HepG2 (cell line): ENCODE measurements at regions of chr4 and their contacts with region 1.

Region 1: DNA sequence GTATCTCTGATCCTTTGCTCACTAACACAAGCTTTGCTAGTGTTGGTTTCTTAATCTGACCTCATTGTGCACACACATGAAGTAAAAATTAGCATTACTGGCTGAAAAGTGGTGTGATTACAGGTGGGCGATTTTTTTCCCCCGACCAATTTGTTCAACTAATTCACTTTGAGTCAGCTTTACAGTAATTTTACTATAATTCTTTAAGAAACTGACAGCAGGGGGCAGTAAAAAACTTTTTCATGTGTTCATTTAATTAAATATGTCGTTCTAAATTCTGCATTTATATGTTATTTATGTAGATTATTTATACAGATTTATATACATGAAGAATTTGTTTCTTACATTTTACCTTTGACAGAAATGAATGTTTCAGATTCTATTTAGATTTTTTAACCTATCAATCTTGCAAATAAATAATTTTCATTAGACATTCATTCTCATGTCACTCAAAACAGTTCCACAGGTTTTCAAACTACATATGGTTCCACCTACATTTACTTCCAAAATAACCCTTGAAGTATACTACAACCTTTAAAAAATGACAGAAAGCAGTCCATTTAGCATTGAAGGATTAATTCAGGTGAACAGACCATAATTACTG is 17.5 kb downstream of the PALLD start:
- DNase-seq: peak; percentile 5
- ATAC-seq: no peak
- H3K4me3 ChIP-seq: no peak overlapping the region
- H3K27ac ChIP-seq: no peak overlapping the region
- H3K4me1 ChIP-seq: no peaks in the 10 kb centered on the region
- H3K27me3 ChIP-seq: no peaks in the 10 kb centered on the region
- CTCF ChIP-seq: 0 out of 2 replicates have a peak, but pooled peaks have one; percentile 13
- EP300 ChIP-seq: no peak
- POLR2A ChIP-seq: no peak
- RAD21 ChIP-seq: no peak

Region 2: DNA sequence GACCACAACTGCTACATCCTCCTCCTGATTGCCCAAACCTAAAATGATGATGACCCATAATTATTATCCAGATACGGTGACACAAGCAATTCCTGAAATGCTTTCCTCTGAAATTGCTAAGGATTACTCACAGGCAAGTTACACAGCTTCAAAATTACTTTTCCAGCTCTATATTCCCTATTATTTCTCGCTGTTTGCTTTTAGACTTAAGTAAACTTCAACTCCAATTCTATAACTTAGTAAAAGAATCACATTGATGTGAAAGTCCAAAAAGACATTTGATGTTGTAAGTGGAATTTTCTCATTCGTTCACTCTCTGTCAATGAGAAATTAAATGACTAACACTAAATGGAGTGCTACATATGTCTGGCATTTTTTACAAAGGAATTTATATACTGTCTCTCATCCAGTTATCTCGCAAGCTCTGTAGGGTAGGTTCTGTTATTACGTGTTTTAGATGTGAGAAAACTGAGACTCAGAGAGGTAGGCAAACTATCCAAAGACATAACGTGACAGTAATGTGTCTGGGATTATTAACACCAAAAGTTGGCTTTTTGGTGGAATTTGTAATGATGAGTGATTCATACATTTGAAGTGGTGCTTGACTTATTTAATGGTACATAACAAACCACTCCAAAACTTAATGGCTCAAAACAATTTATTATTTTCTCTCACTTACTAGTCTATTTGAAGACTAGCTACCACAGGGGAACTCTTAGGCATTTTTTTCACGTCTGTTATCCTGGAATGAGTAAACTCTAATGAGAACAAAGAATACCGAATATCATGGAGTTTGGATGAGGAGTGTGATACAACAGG is 14.0 kb after region 1 on chr4:
- CTCF ChIA-PET with region 1: no interaction called
- POLR2A ChIA-PET with region 1: no interaction called
- in situ Hi-C with region 1: no loop called
- intact Hi-C with region 1: no loop called
- DNase-seq: no peak
- ATAC-seq: no peak
- H3K4me3 ChIP-seq: no peak overlapping the region
- H3K27ac ChIP-seq: no peak overlapping the region
- H3K4me1 ChIP-seq: no peaks in the 10 kb centered on the region
- H3K27me3 ChIP-seq: no peaks in the 10 kb centered on the region
- CTCF ChIP-seq: no peak
- EP300 ChIP-seq: no peak
- POLR2A ChIP-seq: no peak
- RAD21 ChIP-seq: no peak

Region 3: GRCh38 chr4:168648929-168649328 is 134.6 kb after region 1 on chr4:
- CTCF ChIA-PET with region 1: no interaction called
- POLR2A ChIA-PET with region 1: no interaction called
- in situ Hi-C with region 1: no loop called
- intact Hi-C with region 1: no loop called
- DNase-seq: no peak
- ATAC-seq: no peak
- H3K4me3 ChIP-seq: no peak overlapping the region
- H3K27ac ChIP-seq: no peak overlapping the region
- H3K4me1 ChIP-seq: no peaks in the 10 kb centered on the region
- H3K27me3 ChIP-seq: no peaks in the 10 kb centered on the region
- CTCF ChIP-seq: no peak
- EP300 ChIP-seq: no peak
- POLR2A ChIP-seq: no peak
- RAD21 ChIP-seq: no peak

Region 4: DNA sequence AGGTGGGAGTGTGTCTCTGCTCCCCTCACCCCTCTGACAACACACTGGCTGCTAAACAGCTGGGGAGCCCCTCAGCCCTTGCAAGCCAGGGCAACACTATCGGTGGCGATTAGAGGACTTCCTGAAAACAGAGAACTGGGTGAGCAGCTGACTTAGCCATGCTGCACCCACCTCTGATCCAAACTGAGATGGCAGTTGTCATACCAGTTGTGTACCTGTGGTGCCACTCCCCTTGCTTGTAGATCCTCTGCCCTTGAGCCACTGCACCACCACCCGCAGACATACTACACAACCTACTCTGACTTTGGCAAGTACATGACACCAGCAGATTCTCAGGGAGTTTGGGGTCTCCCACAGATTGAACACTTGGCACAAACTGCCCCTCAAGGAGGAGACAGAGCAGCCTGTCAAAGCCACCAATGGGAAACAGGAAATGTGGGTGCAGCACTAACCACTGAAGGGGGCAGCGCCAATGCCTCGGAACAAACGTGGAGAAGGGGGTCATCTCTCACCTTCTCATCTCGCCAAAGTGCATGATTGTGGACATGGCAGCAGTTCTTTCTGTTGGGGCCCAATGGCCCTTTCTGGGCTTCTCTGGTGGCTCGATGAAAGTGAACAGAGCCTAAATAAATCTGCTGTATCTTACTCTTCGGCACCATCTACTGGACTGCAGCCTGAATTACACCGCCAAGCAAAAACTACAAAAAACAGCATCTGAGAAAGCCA is 978.2 kb after region 1 on chr4:
- CTCF ChIA-PET with region 1: interaction called, 3 read pairs
- POLR2A ChIA-PET with region 1: no interaction called
- in situ Hi-C with region 1: no loop called
- intact Hi-C with region 1: loop called (anchors 2 kb)
- DNase-seq: peak; percentile 39
- ATAC-seq: peak; percentile 65
- H3K4me3 ChIP-seq: no peak overlapping the region
- H3K27ac ChIP-seq: no peak overlapping the region
- H3K4me1 ChIP-seq: no peaks in the 10 kb centered on the region
- H3K27me3 ChIP-seq: no peaks in the 10 kb centered on the region
- CTCF ChIP-seq: peak; percentile 74
- EP300 ChIP-seq: no peak
- POLR2A ChIP-seq: no peak
- RAD21 ChIP-seq: peak; percentile 53; the same call in 1 of the 2 replicates